Activated T-helper 1 cell treated with anti-CD3 and anti-CD28 coated beads, Interleukin-12 subunit alpha, Interleukin-12 subunit beta, Interleukin-2, Interleukin-4 antibody, amounts not matched to agents 30 ng/mL and 10 ng/mL and 1 ng/mL, durations not matched to agents 14 hours and 24 hours and 36 hours (primary cell): ENCODE measurements at regions of chr5 and their contacts with region 1.

Region 1: GRCh38 chr5:139560752-139561654 is at the start of gene UBE2D2:
- DNase-seq: peak; percentile 97
- H3K4me3 Mint-ChIP-seq: peak within 1 kb of the TSS; percentile 98
- H3K27ac Mint-ChIP-seq: peak within 1 kb of the TSS; percentile 95
- H3K4me1 Mint-ChIP-seq: peaks cover 27% of the 10 kb centered on the region
- H3K27me3 Mint-ChIP-seq: no peaks in the 10 kb centered on the region
- total RNA-seq, gene UBE2D2: 251 and 265 TPM in 2 replicates

Region 2: GRCh38 chr5:138352071-138352721 is 1208.8 kb before region 1 on chr5 and contains the start of gene KDM3B:
- intact Hi-C with region 1: loop called (anchors 10 kb)
- DNase-seq: peak; percentile 93
- H3K4me3 Mint-ChIP-seq: peak within 1 kb of the TSS; percentile 100
- H3K27ac Mint-ChIP-seq: peak within 1 kb of the TSS; percentile 97
- H3K4me1 Mint-ChIP-seq: peaks cover 51% of the 10 kb centered on the region
- H3K27me3 Mint-ChIP-seq: peaks cover 3% of the 10 kb centered on the region
- total RNA-seq, gene KDM3B: 55.0 and 59.3 TPM in 2 replicates

Region 3: DNA sequence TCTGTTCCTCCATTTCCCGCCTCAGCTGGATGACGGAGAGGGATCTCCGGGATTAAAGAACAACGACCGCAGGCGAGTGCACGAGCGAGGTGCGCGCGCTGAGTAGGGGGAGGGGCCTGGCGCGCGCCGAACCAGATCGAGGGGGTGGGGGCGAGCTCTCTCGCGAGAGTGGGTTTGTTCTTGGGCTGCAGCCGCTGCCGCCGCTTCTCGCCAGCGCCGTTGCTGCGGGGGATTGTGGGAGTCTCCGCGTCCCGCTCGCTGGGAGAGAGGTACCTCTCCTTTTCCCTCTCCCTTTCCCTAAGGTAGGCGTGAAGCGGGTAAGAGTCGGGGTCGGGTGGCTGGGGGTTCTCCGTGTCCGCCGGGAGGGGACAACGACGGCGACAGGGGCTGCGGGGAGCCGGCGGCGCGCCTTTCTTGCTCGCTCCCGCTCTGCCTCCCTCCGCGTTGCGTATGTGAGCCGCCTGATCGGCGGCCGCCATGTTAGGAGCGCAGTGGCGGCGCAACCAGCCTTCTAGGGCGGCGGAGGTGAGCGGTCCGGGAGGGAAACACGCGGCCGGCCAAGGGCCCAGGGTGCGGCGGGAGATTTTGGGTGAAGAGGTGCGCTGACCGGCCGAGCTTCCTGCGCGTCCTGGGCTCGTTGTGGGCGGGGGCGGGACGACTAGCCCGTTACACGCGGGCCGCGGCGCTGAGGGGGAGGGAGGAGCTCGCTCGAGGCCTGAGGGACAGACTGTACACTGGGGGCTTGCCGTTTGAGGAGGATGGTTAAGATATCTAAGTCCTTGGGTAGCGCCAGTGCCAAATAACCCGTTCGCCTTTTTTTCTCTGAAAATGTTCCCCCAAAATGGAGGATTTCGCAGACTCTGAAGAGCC is 267.3 kb before region 1 on chr5 and contains the start of gene MATR3:
- intact Hi-C with region 1: loop called (anchors 5 kb)
- DNase-seq: peak; percentile 88
- H3K4me3 Mint-ChIP-seq: peak within 1 kb of the TSS; percentile 95
- H3K27ac Mint-ChIP-seq: peak within 1 kb of the TSS; percentile 94
- H3K4me1 Mint-ChIP-seq: peaks cover 37% of the 10 kb centered on the region
- H3K27me3 Mint-ChIP-seq: no peaks in the 10 kb centered on the region
- total RNA-seq, gene MATR3: 232 and 258 TPM in 2 replicates

Region 4: DNA sequence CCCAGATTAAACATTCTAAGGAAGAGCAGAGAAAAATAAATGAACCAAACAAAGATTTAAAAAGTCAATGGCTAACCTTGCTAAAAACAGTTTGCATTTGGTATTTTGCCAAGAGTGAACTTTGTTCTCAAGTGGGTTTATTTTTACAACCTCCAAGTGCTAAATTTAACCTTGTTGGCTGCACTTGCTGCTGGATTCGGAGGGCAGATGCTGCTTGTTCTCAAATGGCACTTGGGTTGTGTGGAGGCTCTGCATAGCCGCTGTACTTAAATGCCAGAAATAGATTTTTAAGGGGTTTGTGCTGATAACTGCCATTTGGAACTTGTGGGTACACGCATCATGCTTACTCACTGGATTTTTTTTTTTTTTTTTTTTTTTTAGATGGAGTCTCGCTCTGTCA is 143.8 kb before region 1 on chr5:
- intact Hi-C with region 1: loop called (anchors 1 kb)
- DNase-seq: no peak
- H3K4me3 Mint-ChIP-seq: no peak overlapping the region
- H3K27ac Mint-ChIP-seq: peak overlapping the region; percentile 94
- H3K4me1 Mint-ChIP-seq: peaks cover 61% of the 10 kb centered on the region
- H3K27me3 Mint-ChIP-seq: no peaks in the 10 kb centered on the region

Region 5: GRCh38 chr5:139482050-139482889 is 78.7 kb before region 1 on chr5 and contains the start of gene STING1:
- intact Hi-C with region 1: loop called (anchors 1 kb)
- DNase-seq: peak; percentile 57
- H3K4me3 Mint-ChIP-seq: peak within 1 kb of the TSS; percentile 90
- H3K27ac Mint-ChIP-seq: peak within 1 kb of the TSS; percentile 88
- H3K4me1 Mint-ChIP-seq: peaks cover 45% of the 10 kb centered on the region
- H3K27me3 Mint-ChIP-seq: no peaks in the 10 kb centered on the region
- total RNA-seq, gene STING1: 213 and 226 TPM in 2 replicates

Region 6: GRCh38 chr5:139633295-139634027 is 72.5 kb after region 1 on chr5:
- intact Hi-C with region 1: loop called (anchors 1 kb)
- DNase-seq: peak; percentile 48
- H3K4me3 Mint-ChIP-seq: no peak overlapping the region
- H3K27ac Mint-ChIP-seq: peak overlapping the region; percentile 11
- H3K4me1 Mint-ChIP-seq: peaks cover 35% of the 10 kb centered on the region
- H3K27me3 Mint-ChIP-seq: no peaks in the 10 kb centered on the region

Region 7: DNA sequence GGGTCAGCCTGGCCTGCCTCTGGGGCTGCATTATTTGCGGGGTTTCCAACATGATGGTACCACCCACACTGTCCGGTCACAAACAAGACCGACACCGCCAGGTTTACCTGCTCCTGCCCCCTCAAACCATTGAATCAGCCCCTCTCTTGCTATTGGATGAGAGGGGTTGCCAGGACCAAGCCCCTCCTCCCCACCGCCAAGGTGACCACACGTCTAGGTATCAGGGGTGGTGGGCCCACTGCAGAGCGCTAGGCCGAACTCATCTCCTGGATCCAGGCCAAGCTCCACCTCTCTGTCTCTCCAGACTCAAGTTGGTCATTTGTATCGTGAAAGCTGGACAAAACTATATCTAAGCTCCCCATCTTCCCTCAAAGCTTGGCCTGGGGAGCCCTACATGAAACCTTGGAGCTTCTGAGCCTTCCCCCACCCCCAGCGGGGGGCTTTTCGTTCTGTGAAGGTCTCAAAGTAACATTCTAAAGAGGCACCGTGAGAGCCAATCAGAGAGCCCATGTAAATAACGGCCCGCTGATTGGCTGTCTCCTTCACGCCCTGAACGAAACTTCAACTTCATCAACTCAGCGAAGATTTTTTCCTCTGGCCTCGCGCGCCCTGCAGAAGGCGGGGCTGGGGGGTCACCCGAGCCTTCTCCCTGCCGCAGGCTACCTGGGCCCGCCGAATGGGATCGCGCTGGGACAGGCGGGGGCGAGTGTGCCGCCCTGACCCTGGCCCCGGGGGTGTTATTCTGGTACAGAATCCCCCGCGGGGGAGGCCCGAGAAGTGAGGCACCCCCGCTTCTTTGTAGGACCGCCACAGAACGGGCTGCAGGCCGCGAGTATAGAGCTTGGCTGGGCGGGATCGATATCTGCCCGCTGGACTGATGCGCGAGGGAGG is 185.0 kb after region 1 on chr5:
- intact Hi-C with region 1: no loop called
- DNase-seq: peak; percentile 19
- H3K4me3 Mint-ChIP-seq: peak overlapping the region; percentile 85
- H3K27ac Mint-ChIP-seq: peak overlapping the region; percentile 26
- H3K4me1 Mint-ChIP-seq: peaks cover 24% of the 10 kb centered on the region
- H3K27me3 Mint-ChIP-seq: peaks cover 45% of the 10 kb centered on the region